ENCODE measurements at regions of chr18 and their contacts with region 1.

Region 1: DNA sequence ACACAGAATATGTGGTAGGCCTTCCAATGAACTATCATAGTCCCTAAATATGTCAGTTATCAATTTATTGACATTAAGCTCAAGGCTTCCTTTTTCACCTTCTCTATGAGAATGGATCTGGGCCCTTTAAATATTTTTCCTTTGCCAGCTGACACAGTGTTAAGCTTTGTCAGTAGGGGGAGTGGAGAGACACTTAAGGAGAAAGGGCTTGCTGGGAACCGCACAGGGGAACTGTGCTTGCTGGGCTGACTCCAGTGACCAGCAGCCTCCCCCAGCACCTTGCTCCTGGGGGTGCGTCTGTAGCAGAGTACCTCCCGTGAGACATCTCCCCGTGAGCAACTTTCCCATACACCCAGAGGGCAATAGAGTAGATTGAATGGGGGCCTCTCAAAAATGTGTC is 6.5 kb upstream of the PTPN2 start:
- DNase-seq: no peak
- ATAC-seq: peak; percentile 72
- H3K4me3 ChIP-seq: no peak overlapping the region
- H3K27ac ChIP-seq: no peak overlapping the region
- H3K4me1 ChIP-seq: no peaks in the 10 kb centered on the region
- H3K27me3 ChIP-seq: no peaks in the 10 kb centered on the region
- CTCF ChIP-seq: 0 out of 6 replicates have a peak, but pooled peaks of 1 of the 3 experiments have one; percentile 4
- POLR2A ChIP-seq: no peak
- RAD21 ChIP-seq: no peak

Region 2: DNA sequence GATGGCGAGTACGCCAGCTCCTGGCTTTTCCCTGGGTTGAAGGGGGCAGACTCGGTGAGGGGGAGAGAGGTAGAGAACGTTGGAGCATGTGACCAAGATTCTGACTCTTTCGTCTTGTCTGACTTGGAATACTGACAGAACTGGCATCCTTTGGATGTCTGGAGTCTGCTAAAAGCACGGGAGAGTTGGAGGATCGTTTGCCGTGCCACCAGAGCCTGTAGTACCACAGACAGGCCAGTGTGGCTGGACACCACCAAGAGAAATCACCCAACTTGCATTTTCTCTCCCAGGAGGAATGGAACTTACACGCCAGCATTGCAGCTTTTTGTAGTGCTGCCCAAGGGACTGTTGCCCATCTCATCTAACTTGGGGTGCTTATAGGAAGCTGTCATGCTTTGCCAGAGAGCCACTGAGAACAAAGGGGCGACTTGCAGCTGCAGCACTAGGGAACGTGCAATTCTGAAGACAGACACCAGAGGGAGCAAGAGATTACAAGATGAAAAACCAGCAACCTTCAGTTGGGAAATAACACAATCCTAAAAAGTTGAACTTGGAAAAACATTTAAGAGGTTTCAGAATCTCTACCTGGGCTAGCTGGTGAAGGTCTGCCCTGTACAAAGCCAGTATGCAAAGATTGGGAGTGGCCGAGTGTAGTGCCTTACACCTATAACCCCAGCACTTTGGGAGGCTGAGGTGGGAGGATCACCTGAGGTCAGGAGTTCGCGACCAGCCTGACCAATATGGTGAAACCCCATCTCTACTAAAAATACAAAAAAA is 163.5 kb before region 1 on chr18:
- CTCF ChIA-PET with region 1: no interaction called
- POLR2A ChIA-PET with region 1: no interaction called
- RAD21 ChIA-PET with region 1: no interaction called
- intact Hi-C with region 1: loop called (anchors 1 kb)
- DNase-seq: peak; percentile 49
- ATAC-seq: peak; percentile 63
- H3K4me3 ChIP-seq: no peak overlapping the region
- H3K27ac ChIP-seq: no peak overlapping the region
- H3K4me1 ChIP-seq: peaks cover 0 to 8% of the 10 kb centered on the region in 2 experiments; a peak in 3 of 4 replicates
- H3K27me3 ChIP-seq: no peaks in the 10 kb centered on the region
- CTCF ChIP-seq: peak; percentile 71 to 92 (median 86); a peak in 5 of 6 replicates
- POLR2A ChIP-seq: no peak
- RAD21 ChIP-seq: peak; percentile 79

Region 3: GRCh38 chr18:12744103-12744502 is 146.4 kb before region 1 on chr18:
- CTCF ChIA-PET with region 1: no interaction called
- POLR2A ChIA-PET with region 1: no interaction called
- RAD21 ChIA-PET with region 1: no interaction called
- intact Hi-C with region 1: loop called (anchors 2 kb)
- DNase-seq: peak; percentile 42
- ATAC-seq: peak; percentile 94
- H3K4me3 ChIP-seq: no peak overlapping the region
- H3K27ac ChIP-seq: no peak overlapping the region
- H3K4me1 ChIP-seq: peaks cover 4 to 5% of the 10 kb centered on the region in 2 experiments; a peak in 2 of 4 replicates
- H3K27me3 ChIP-seq: no peaks in the 10 kb centered on the region
- CTCF ChIP-seq: peak; percentile 36 to 71 (median 66)
- POLR2A ChIP-seq: no peak
- RAD21 ChIP-seq: peak; percentile 79

Region 4: GRCh38 chr18:13051950-13052349 is 161.4 kb after region 1 on chr18:
- CTCF ChIA-PET with region 1: no interaction called
- POLR2A ChIA-PET with region 1: no interaction called
- RAD21 ChIA-PET with region 1: no interaction called
- intact Hi-C with region 1: no loop called
- DNase-seq: no peak
- ATAC-seq: no peak
- H3K4me3 ChIP-seq: no peak overlapping the region
- H3K27ac ChIP-seq: no peak overlapping the region
- H3K4me1 ChIP-seq: no peaks in the 10 kb centered on the region
- H3K27me3 ChIP-seq: no peaks in the 10 kb centered on the region
- CTCF ChIP-seq: no peak
- POLR2A ChIP-seq: no peak
- RAD21 ChIP-seq: no peak